Endothelial cell of umbilical vein (primary cell): ENCODE measurements at regions of chr9 and their contacts with region 1.

Region 1: DNA sequence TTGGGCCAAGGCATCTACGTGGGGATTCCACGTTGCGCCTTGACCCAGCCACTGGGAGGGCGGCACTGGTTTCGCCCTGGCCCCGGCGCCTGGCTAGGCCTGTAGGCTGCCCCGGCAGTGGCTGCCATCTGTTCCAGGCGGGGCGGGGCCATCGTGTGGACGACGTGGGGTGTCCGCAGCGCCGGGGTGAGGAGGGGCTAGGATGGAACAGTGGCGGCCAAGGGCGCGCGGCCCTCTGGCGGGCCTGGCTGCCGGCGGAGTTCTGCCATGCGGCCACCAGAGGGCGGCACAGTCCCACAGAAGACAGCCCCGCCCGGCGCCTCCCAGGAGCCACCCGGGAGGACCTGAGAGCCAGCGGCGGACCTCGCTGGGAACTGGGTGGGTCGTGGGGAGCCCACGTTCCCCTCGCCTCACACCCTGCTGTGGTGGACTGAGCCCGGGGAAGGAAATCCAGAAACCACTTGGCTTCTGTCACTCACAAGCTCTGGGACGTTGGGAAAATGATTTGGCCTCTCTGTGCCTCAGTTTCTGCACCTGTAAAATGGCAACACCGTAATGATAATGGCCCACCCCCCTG is 22.6 kb upstream of the RAPGEF1 start:
- DNase-seq: peak; percentile 47
- H3K4me3 ChIP-seq: no peak overlapping the region
- H3K27ac ChIP-seq: no peak overlapping the region
- H3K4me1 ChIP-seq: no peaks in the 10 kb centered on the region
- H3K27me3 ChIP-seq: peaks cover 13 to 17% of the 10 kb centered on the region in 2 experiments
- CTCF ChIP-seq: peak; percentile 77 to 91
- POLR2A ChIP-seq: no peak

Region 2: DNA sequence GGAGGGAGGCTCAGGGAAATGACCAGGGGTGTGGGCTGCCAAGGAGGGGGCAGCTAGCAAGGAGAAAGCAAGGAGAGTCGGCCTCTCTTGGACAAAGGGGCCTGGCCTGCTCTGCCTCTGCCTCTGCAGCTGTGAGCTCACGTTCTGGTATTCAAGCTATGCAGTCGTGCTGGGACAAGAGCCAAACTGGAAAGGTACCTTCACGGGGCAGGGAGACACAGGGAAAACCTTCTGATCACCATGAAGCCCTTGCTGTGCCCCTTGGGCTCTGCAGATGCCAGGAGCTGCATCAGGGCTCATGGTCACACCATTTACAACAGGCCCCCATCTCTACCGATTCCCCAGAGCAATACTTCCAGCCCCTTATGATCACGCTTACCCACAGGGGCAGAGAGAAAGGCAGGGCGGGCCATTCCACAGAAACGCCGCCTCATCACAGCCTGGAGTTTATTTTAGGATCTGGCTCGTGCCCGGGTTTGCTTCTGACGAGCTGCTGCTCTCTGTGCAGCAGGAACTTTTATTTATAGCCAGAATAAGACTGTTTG is 153.9 kb before region 1 on chr9:
- CTCF ChIA-PET with region 1: no interaction called
- POLR2A ChIA-PET with region 1: no interaction called
- dilution Hi-C with region 1: no loop called
- intact Hi-C with region 1: no loop called
- DNase-seq: peak; percentile 85
- H3K4me3 ChIP-seq: no peak overlapping the region
- H3K27ac ChIP-seq: peak overlapping the region; percentile 45
- H3K4me1 ChIP-seq: peaks cover 17% of the 10 kb centered on the region
- H3K27me3 ChIP-seq: no peaks in the 10 kb centered on the region
- CTCF ChIP-seq: no peak
- POLR2A ChIP-seq: no peak

Region 3: GRCh38 chr9:132240753-132241493 is 478.5 kb after region 1 on chr9:
- CTCF ChIA-PET with region 1: interaction called, 234 read pairs
- POLR2A ChIA-PET with region 1: interaction called, 4 read pairs
- dilution Hi-C with region 1: no loop called
- intact Hi-C with region 1: loop called (anchors 1 kb)
- DNase-seq: peak; percentile 92
- H3K4me3 ChIP-seq: peak overlapping the region; percentile 41 to 63 (median 54)
- H3K27ac ChIP-seq: no peak overlapping the region
- H3K4me1 ChIP-seq: peaks cover 7% of the 10 kb centered on the region
- H3K27me3 ChIP-seq: peaks cover 4 to 5% of the 10 kb centered on the region in 2 experiments
- CTCF ChIP-seq: no peak
- POLR2A ChIP-seq: no peak

Region 4: GRCh38 chr9:132249123-132249522 is 486.7 kb after region 1 on chr9:
- CTCF ChIA-PET with region 1: interaction called, 234 read pairs
- POLR2A ChIA-PET with region 1: no interaction called
- dilution Hi-C with region 1: no loop called
- intact Hi-C with region 1: loop called (anchors 1 kb)
- DNase-seq: no peak
- H3K4me3 ChIP-seq: no peak overlapping the region
- H3K27ac ChIP-seq: no peak overlapping the region
- H3K4me1 ChIP-seq: no peaks in the 10 kb centered on the region
- H3K27me3 ChIP-seq: peaks cover 2 to 5% of the 10 kb centered on the region in 2 experiments
- CTCF ChIP-seq: no peak
- POLR2A ChIP-seq: no peak

Region 5: DNA sequence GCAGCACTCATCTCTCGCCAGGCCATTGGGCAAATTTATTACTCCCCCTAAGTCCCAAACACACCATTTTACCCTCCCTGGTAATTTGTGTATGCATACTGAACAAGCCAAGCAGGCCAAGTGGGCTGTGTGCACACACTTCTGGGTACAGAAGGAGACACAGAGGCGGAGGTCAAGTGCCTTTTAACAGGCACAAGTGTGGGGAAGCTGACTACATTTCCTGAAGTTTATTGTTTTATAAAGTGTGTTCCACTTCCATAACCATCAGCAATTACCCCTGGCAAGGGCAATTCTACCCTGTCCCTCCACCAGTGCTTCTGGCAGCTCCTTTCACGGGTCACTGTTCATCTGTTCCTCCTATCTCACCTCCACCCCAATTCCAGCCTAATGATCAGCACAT is 498.4 kb after region 1 on chr9:
- CTCF ChIA-PET with region 1: interaction called, 234 read pairs
- POLR2A ChIA-PET with region 1: no interaction called
- dilution Hi-C with region 1: no loop called
- intact Hi-C with region 1: no loop called
- DNase-seq: peak; percentile 55
- H3K4me3 ChIP-seq: no peak overlapping the region
- H3K27ac ChIP-seq: peak overlapping the region; percentile 40
- H3K4me1 ChIP-seq: peaks cover 20% of the 10 kb centered on the region
- H3K27me3 ChIP-seq: no peaks in the 10 kb centered on the region
- CTCF ChIP-seq: no peak
- POLR2A ChIP-seq: no peak

Region 6: GRCh38 chr9:132268725-132269352 is 506.4 kb after region 1 on chr9:
- CTCF ChIA-PET with region 1: interaction called, 22 read pairs
- POLR2A ChIA-PET with region 1: no interaction called
- dilution Hi-C with region 1: no loop called
- intact Hi-C with region 1: loop called (anchors 1 kb)
- DNase-seq: peak; percentile 74
- H3K4me3 ChIP-seq: no peak overlapping the region
- H3K27ac ChIP-seq: no peak overlapping the region
- H3K4me1 ChIP-seq: peaks cover 7% of the 10 kb centered on the region
- H3K27me3 ChIP-seq: no peaks in the 10 kb centered on the region
- CTCF ChIP-seq: peak; percentile 85 to 93
- POLR2A ChIP-seq: no peak